Cardiac septum (tissue), 1 donor: ENCODE measurements at regions of chr13 and their contacts with region 1.

Region 1: GRCh38 chr13:103788061-103788652 is 721.9 kb upstream of the SLC10A2 start:
- DNase-seq: no peak

Region 2: GRCh38 chr13:102913914-102914313 is 874.2 kb before region 1 on chr13:
- intact Hi-C with region 1: loop called (anchors 10 kb)
- DNase-seq: no peak

Region 3: GRCh38 chr13:103715335-103715734 is 72.8 kb before region 1 on chr13:
- intact Hi-C with region 1: no loop called
- DNase-seq: no peak